Naive thymus-derived CD8-positive, alpha-beta T cell (primary cell): ENCODE measurements at regions of chr14 and their contacts with region 1.

Region 1: DNA sequence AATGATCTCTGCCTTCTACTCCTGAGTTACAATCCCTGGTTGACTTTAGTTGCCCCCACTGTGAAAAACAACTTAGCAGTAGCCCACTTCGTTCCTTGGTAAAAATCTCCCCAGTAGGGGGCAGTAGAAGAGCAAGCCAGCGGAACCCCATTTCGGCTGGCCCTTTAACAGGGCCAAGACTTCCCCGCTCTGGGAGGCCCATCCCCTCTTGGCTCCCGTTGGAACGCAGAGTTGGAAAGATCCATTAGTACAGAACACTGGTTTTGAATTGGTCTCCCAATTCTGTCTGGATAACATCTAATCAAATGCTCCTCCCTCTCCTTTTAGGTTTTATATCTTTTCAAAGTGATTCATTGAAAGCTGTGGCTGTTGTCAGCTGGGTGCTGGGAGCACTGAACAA is 1133.3 kb downstream of the BCL11B start:
- DNase-seq: peak; percentile 38 to 88 (median 74)
- ATAC-seq: peak; percentile 40 to 62
- H3K4me3 Mint-ChIP-seq: peak overlapping the region; percentile 85 to 97 (median 94)
- H3K27ac Mint-ChIP-seq: peak overlapping the region; percentile 96 to 100 (median 99)
- H3K4me1 Mint-ChIP-seq: peaks cover 59 to 97% (median 87%) of the 10 kb centered on the region in 4 donors
- H3K27me3 Mint-ChIP-seq: no peaks in the 10 kb centered on the region

Region 2: DNA sequence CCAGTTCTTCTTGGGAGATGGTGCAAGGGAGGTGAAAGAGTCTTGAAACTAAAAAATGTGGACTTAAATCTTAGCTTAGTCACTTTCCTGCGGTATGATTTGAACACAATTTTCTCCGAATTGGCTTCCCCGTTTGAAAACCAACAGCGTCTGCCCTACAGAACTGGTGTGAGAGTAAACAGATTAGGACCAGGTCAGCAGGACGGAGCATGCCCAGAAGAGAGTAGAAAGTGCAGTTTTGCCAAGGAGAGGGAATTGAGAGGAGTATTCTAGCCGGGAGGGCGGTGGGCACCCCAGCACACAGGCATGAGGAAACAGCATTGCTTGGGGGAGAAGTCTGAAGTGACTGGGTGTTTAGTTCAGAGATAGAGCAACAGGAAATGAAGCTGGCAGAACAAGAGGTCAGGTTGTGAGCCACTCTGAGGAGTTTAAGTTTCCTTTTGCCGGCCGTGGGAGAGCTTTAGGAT is 414.4 kb before region 1 on chr14:
- POLR2A ChIA-PET with region 1: interaction called, 10 read pairs
- DNase-seq: peak in 7 of 10 donors; percentile 29 to 65 (median 57)
- ATAC-seq: peak; percentile 82 to 86
- H3K4me3 Mint-ChIP-seq: peak overlapping the region; percentile 77 to 92 (median 85)
- H3K27ac Mint-ChIP-seq: peak overlapping the region; percentile 88 to 100 (median 96)
- H3K4me1 Mint-ChIP-seq: peaks cover 44 to 84% (median 77%) of the 10 kb centered on the region in 4 donors
- H3K27me3 Mint-ChIP-seq: no peaks in the 10 kb centered on the region

Region 3: GRCh38 chr14:97920211-97920610 is 218.5 kb before region 1 on chr14:
- POLR2A ChIA-PET with region 1: no interaction called
- DNase-seq: no peak
- ATAC-seq: no peak
- H3K4me3 Mint-ChIP-seq: no peak overlapping the region
- H3K27ac Mint-ChIP-seq: peak overlapping the region in 1 of 10 donors; percentile 66
- H3K4me1 Mint-ChIP-seq: peaks cover 14 to 36% (median 26%) of the 10 kb centered on the region in 4 donors
- H3K27me3 Mint-ChIP-seq: no peaks in the 10 kb centered on the region

Region 4: GRCh38 chr14:98018628-98019027 is 120.0 kb before region 1 on chr14:
- POLR2A ChIA-PET with region 1: interaction called, 10 read pairs
- DNase-seq: peak in 9 of 10 donors; percentile 38 to 82 (median 68)
- ATAC-seq: peak; percentile 94 to 96
- H3K4me3 Mint-ChIP-seq: peak overlapping the region; percentile 23 to 61 (median 48)
- H3K27ac Mint-ChIP-seq: peak overlapping the region; percentile 7 to 92 (median 68)
- H3K4me1 Mint-ChIP-seq: peaks cover 38 to 87% (median 73%) of the 10 kb centered on the region in 4 donors
- H3K27me3 Mint-ChIP-seq: no peaks in the 10 kb centered on the region

Region 5: DNA sequence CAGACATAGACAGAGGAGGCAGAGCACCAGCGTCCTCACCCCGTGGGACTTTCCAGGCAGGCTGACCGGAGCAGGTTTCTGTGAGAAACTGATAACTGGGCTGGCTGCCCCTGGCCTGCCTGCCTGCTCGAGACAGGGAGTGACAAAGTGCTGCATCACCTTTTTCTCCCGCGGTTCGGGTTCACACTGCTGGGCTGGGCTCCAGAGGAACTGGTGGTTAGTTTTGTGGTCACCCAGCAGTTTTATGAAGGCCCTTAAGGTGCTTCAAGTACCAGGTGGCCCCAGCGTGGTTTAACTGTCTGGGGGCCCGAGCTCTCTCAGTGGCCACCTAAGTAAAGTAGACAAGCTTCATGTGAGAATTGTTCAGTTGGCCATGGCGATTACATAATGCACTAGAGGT is 59.7 kb after region 1 on chr14:
- POLR2A ChIA-PET with region 1: interaction called, 343 read pairs
- DNase-seq: peak in 3 of 10 donors; percentile 31 to 45 (median 42)
- ATAC-seq: peak; percentile 42 to 62
- H3K4me3 Mint-ChIP-seq: peak overlapping the region; percentile 20 to 87 (median 70)
- H3K27ac Mint-ChIP-seq: peak overlapping the region; percentile 70 to 100 (median 96)
- H3K4me1 Mint-ChIP-seq: peaks cover 57 to 99% (median 89%) of the 10 kb centered on the region in 4 donors
- H3K27me3 Mint-ChIP-seq: no peaks in the 10 kb centered on the region

Region 6: GRCh38 chr14:99230208-99231151 is 1091.8 kb after region 1 on chr14:
- POLR2A ChIA-PET with region 1: interaction called, 17 read pairs
- DNase-seq: peak; percentile 69 to 93 (median 88)
- ATAC-seq: peak; percentile 46 to 76
- H3K4me3 Mint-ChIP-seq: peak overlapping the region; percentile 71 to 94 (median 82)
- H3K27ac Mint-ChIP-seq: peak overlapping the region; percentile 97 to 100 (median 98)
- H3K4me1 Mint-ChIP-seq: peaks cover 65 to 97% (median 95%) of the 10 kb centered on the region in 4 donors
- H3K27me3 Mint-ChIP-seq: no peaks in the 10 kb centered on the region